ENCODE measurements at regions of chr11 and their contacts with region 1.

Region 1: GRCh38 chr11:76444384-76445123 is at the start of gene EMSY:
- DNase-seq: peak; percentile 98 to 99
- H3K4me3 ChIP-seq: peak within 1 kb of the TSS; percentile 80 to 99
- H3K27ac ChIP-seq: peak within 1 kb of the TSS; percentile 89 to 96
- H3K4me1 ChIP-seq: peaks cover 0 to 22% (median 17%) of the 10 kb centered on the region in 4 donors
- H3K27me3 ChIP-seq: no peaks in the 10 kb centered on the region
- CTCF ChIP-seq: no peak

Region 2: DNA sequence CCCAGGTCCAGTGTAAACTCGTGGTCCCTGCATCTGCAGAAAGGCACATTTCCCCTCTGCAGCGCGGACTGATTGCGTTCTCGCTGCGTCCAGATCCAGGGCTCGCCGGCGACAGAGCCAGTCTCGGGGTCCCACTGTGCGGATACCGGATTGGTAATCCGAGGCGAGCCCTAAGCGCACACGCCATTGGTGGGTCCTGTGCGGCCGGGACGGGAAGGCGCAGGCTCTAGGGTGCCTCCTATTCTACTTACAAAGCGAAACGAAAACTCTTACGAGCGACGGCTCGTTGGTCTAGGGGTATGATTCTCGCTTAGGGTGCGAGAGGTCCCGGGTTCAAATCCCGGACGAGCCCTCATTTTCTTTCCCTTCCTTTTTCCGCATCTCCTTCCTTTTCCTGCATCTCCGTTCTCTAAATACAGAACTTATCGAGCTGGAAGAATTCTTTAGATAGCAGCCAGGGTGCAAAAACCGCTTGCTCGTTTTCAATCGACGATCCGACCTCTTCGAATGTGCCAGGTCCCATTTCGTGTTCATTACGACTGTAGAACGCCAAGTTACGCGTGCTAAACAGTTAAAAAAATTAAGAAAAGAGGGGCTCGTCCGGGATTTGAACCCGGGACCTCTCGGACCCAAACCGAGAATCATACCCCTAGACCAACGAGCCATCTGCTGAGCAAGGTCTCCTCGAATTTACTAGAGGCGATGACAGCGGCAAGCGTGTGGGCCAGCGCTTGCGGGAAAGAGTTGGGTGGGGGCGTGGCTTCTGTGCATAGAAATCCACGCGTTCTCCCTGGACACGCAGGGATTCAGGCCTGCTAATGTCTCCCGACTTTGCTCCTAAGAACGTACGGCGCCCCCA is 209.1 kb before region 1 on chr11:
- intact Hi-C with region 1: loop called (anchors 5 kb)
- DNase-seq: peak; percentile 91 to 95
- H3K4me3 ChIP-seq: peak overlapping the region; percentile 77 to 83
- H3K27ac ChIP-seq: peak overlapping the region; percentile 83 to 86
- H3K4me1 ChIP-seq: peaks cover 0 to 18% (median 12%) of the 10 kb centered on the region in 4 donors
- H3K27me3 ChIP-seq: peaks cover 0 to 2% of the 10 kb centered on the region in 2 donors
- CTCF ChIP-seq: no peak

Region 3: DNA sequence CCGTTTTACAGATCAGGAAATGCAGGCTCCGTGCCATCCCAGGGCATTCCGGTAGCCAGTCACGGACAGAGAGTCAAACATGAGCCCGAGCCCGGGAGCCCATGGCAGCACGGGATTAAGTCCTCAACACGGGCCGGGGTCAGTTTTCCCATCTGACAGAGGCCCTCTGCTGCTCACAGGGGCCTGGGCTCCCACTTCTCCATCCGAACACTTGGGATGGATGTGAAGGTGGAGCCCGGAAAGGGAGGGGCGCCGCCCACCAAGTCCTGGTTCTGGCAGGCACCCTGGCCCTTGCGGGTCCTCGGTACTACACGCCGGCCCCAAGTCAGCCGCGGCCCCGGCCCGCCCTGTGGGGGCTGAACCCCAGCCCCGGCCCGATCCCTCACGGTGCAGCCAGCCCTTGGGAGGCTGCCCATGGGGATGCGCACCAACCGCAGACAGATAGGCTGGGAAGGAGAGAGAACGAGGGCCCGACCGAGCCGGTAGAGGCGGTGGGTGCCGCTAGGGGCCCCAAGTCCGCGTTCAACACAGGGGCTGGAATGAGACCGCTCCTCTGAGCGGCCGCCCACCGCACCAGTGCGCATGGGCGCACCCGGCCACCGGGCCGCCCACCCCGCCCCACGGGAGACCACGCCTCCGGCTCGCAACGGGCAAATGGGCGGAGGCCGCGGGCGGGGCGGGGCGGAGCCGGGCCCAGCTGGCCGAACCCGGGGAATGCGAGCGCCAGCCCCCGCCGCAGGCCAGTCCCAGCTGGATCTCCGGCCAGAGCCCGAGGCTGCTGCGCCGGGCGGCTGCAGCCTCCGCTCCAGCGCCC is 621.9 kb after region 1 on chr11 and contains the start of gene CAPN5:
- intact Hi-C with region 1: loop called (anchors 10 kb)
- DNase-seq: peak; percentile 89 to 95
- H3K4me3 ChIP-seq: peak within 1 kb of the TSS; percentile 79 to 91
- H3K27ac ChIP-seq: peak within 1 kb of the TSS; percentile 90 to 96
- H3K4me1 ChIP-seq: peaks cover 0 to 16% (median 7%) of the 10 kb centered on the region in 4 donors
- H3K27me3 ChIP-seq: no peaks in the 10 kb centered on the region
- CTCF ChIP-seq: peak; percentile 12 to 53

Measured in tibial artery (tissue), 4 donors.